ENCODE measurements at regions of chr10 and their contacts with region 1.

Region 1: DNA sequence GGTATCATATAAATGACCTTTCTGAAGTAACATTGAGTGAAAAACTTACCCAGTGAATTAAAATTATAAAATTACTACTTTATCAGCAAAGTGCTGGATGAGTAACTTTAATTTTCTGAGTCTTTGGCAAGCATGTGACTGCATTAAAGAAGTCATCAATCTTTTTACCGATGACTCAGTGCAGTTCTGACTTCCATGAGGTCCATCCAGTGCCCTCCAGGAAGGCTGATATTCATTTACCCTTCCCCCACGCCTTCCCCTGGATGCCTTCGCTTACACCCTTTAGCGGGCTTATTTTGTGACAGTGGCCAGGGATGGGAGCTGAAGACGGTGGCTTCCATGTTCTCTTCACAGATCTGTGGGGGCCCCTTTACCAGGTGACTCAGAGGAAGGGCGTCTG is 572.9 kb upstream of the PFKP start:
- DNase-seq: no peak
- H3K4me3 ChIP-seq: no peak overlapping the region
- H3K27ac ChIP-seq: no peak overlapping the region
- H3K4me1 ChIP-seq: no peaks in the 10 kb centered on the region
- H3K27me3 ChIP-seq: peaks cover 0 to 3% of the 10 kb centered on the region in 2 donors
- CTCF ChIP-seq: no peak
- POLR2A ChIP-seq: no peak

Region 2: GRCh38 chr10:2445370-2445769 is 49.0 kb before region 1 on chr10:
- intact Hi-C with region 1: loop called (anchors 2 kb)
- DNase-seq: no peak
- H3K4me3 ChIP-seq: no peak overlapping the region
- H3K27ac ChIP-seq: no peak overlapping the region
- H3K4me1 ChIP-seq: no peaks in the 10 kb centered on the region
- H3K27me3 ChIP-seq: no peaks in the 10 kb centered on the region
- CTCF ChIP-seq: no peak
- POLR2A ChIP-seq: no peak

Measured in breast epithelium (tissue), 4 donors.